ENCODE measurements at regions of chr14 and their contacts with region 1.

Region 1: DNA sequence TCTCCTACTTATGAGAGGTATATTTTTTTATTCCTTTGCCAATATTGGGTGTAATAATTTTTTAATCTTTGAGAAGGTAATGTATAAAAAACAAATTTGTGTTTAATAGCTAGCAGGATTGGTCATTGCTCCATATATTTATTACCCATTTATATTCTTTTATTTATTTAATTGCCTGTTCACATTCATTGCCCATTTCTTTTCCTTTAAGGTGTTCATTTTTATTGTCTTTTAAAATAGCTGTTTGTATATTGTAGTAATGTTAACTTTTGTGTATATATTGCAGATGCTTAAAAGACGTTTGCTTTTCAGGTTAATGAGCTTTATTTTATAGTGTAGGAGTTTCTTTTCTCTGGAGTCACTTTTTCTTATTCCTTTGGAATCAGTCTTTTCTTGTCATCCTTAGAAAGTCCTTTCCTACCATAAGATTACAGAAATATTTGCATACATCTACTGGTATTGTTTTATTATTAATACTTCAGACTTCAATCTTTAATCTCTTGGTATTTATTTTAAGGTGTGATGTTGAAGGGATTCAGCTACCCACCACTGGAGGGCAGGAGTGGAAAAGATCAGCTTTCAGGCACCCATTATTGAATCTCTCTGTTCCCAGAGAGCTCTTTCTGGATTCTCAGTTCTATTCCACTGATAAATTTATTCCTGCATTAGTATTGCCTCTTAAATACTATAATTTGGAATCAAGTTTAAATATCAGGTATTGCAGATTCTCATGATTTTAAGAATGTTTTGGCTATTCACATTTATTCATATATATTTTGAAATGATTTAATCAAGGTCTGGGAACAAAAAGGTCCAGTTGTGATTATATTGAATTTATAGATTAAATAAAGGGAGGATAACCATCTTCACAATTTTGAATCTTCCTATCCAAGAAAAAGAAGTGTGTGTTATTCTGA is 17.3 kb downstream of the PPM1A start:
- H3K4me3 ChIP-seq: no peak overlapping the region
- H3K27ac ChIP-seq: no peak overlapping the region
- H3K4me1 ChIP-seq: no peaks in the 10 kb centered on the region; the same call in 1 of the 2 replicates
- CTCF ChIP-seq: no peak

Region 2: GRCh38 chr14:60254176-60254575 is 12.1 kb before region 1 on chr14:
- CTCF ChIA-PET with region 1: interaction called, 18 read pairs
- POLR2A ChIA-PET with region 1: interaction called, 8 read pairs
- H3K4me3 ChIP-seq: no peak overlapping the region
- H3K27ac ChIP-seq: no peak overlapping the region
- H3K4me1 ChIP-seq: peaks cover 31% of the 10 kb centered on the region
- CTCF ChIP-seq: no peak

Region 3: DNA sequence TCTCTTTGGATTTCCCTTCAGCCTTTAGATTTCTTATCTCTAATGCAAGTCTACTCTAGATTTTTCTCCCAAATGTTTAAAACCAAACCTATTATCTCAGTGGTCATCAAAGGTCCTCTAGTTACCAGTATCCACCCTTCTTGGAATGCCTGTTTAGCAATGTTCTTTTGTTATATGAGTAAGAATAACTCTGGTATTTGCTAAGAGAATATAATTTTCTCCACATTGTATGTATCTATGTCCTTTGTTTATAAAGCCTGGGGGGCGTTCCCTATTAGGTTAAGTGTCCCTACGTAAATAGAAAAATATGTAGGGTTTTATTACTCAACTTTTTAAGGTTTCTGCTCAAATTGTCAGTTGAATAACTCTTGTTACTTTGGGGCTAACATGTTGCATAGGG is 10.1 kb after region 1 on chr14:
- CTCF ChIA-PET with region 1: interaction called, 18 read pairs
- POLR2A ChIA-PET with region 1: no interaction called
- H3K4me3 ChIP-seq: no peak overlapping the region
- H3K27ac ChIP-seq: no peak overlapping the region
- H3K4me1 ChIP-seq: peaks cover 4% of the 10 kb centered on the region
- CTCF ChIP-seq: no peak

Region 4: DNA sequence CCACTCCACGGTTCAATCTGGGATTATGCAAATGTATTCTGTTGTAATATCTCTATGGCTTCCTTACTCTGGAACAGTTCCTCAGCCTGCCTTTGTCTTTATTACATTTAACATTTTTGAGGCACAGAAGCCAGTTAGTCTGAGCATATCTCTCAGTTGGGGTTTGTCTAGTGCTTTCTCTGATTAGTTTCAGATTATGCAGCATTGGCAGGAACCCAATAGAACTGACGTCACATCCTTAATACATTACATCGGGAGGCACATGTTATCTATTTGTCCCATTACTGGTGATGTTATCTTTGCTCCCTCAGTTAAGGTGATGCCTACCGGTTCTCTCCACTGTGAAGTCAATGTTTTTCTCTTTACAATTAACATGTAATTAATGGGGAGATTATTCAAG is 45.1 kb after region 1 on chr14:
- CTCF ChIA-PET with region 1: interaction called, 10 read pairs
- POLR2A ChIA-PET with region 1: no interaction called
- H3K4me3 ChIP-seq: no peak overlapping the region
- H3K27ac ChIP-seq: no peak overlapping the region
- H3K4me1 ChIP-seq: peaks cover 10% of the 10 kb centered on the region; the same call in 1 of the 2 replicates
- CTCF ChIP-seq: no peak

Region 5: GRCh38 chr14:60561845-60562746 is 295.8 kb after region 1 on chr14:
- CTCF ChIA-PET with region 1: interaction called, 10 read pairs
- POLR2A ChIA-PET with region 1: no interaction called
- H3K4me3 ChIP-seq: no peak overlapping the region
- H3K27ac ChIP-seq: no peak overlapping the region
- H3K4me1 ChIP-seq: peaks cover 5% of the 10 kb centered on the region; the same call in 1 of the 2 replicates
- CTCF ChIP-seq: peak; percentile 79